ENCODE measurements at regions of chr6 and their contacts with region 1.

Region 1: DNA sequence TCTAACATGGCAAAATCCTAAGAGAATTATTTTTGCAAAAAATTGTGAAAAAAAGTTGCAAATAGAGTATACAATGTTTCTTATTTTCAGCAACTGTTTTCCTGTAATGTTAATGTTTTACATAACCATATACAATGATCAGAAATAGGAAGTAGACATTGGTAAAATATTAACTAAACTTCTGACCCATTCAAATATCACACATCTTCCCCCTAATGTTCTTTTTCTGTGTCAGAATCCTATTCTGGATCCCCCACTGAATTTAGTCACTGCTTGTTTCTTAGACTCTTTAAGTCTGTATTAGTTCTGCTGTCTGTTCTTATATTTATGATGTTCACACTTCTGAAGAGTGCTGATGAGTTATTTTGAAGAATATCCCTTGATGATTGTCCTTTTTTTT is 62.0 kb downstream of the HFE start:
- DNase-seq: no peak
- ATAC-seq: no peak
- H3K4me3 ChIP-seq: no peak overlapping the region
- H3K27ac ChIP-seq: no peak overlapping the region
- H3K4me1 ChIP-seq: no peaks in the 10 kb centered on the region
- H3K27me3 ChIP-seq: no peaks in the 10 kb centered on the region
- CTCF ChIP-seq: no peak

Region 2: DNA sequence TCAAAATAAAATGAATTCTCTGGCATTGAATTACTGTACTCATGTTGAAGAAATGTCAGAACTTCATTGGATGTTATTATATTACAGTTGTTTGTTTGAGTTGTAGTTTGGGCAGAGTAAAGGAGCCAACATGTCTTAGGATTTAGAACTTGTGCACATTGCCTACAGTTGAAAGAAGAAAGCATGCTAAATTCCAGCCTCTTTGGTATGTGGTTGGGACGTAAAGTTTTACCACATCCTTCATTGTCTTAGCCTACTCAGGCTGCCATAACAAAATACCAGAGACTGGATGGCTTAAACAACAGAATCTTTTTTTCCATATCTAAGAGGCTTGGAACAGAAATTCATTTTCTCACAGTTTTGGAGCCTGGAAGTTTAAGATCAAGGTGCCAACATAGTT is 19.6 kb before region 1 on chr6:
- intact Hi-C with region 1: loop called in 1 of 2 experiments (anchors 2 kb)
- DNase-seq: no peak
- ATAC-seq: no peak
- H3K4me3 ChIP-seq: no peak overlapping the region
- H3K27ac ChIP-seq: no peak overlapping the region
- H3K4me1 ChIP-seq: peaks cover 33% of the 10 kb centered on the region
- H3K27me3 ChIP-seq: no peaks in the 10 kb centered on the region
- CTCF ChIP-seq: no peak

Region 3: DNA sequence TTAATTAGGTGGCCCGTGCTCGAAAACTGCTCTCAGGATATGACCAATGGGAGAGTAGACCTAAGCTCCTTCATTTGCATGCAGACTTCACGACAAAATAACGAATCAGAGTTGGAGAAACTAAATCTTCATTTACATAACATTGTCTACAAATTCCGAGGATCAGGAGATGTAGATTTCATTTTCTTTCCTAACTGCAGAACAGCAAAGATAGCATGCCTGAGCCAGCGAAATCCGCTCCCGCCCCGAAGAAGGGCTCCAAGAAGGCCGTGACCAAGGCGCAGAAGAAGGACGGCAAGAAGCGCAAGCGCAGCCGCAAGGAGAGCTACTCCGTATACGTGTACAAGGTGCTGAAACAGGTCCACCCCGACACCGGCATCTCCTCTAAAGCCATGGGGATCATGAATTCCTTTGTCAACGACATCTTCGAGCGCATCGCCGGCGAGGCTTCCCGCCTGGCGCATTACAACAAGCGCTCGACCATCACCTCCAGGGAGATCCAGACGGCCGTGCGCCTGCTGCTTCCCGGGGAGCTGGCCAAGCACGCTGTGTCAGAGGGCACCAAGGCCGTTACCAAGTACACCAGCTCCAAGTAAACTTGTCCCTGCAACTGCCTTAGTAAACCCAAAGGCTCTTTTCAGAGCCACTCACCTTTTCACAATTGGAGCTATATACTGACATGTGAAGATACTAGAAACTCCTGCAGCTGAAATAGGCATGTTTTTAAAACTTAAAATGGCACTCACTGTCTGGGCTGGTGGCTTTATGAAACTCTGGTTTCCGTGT is 34.5 kb after region 1 on chr6:
- intact Hi-C with region 1: no loop called
- DNase-seq: peak; percentile 45 to 68
- ATAC-seq: peak; percentile 61 to 85 (median 76)
- H3K4me3 ChIP-seq: peak overlapping the region; percentile 72
- H3K27ac ChIP-seq: peak overlapping the region; percentile 65
- H3K4me1 ChIP-seq: peaks cover 4% of the 10 kb centered on the region
- H3K27me3 ChIP-seq: peaks cover 0 to 9% (median 8%) of the 10 kb centered on the region in 3 donors
- CTCF ChIP-seq: no peak

Measured in psoas muscle (tissue), 8 donors.